ENCODE measurements at regions of chr17 and their contacts with region 1.

Region 1: GRCh38 chr17:11935734-11936406 is 61.4 kb downstream of the ZNF18 start:
- DNase-seq: peak in 3 of 4 donors; percentile 34 to 55 (median 35)
- ATAC-seq: peak; percentile 78
- H3K4me3 ChIP-seq: no peak overlapping the region
- H3K27ac ChIP-seq: no peak overlapping the region
- H3K4me1 ChIP-seq: no peaks in the 10 kb centered on the region
- H3K27me3 ChIP-seq: no peaks in the 10 kb centered on the region
- CTCF ChIP-seq: peak; percentile 56 to 92

Region 2: GRCh38 chr17:10875979-10876555 is 1059.8 kb before region 1 on chr17:
- intact Hi-C with region 1: loop called in 1 of 2 experiments (anchors 5 kb)
- DNase-seq: peak in 2 of 4 donors; percentile 8 to 28
- ATAC-seq: peak; percentile 86
- H3K4me3 ChIP-seq: no peak overlapping the region
- H3K27ac ChIP-seq: no peak overlapping the region
- H3K4me1 ChIP-seq: no peaks in the 10 kb centered on the region
- H3K27me3 ChIP-seq: peaks cover 0 to 24% of the 10 kb centered on the region in 2 donors
- CTCF ChIP-seq: peak; percentile 39 to 68

Measured in left lung (tissue), 14 donors.